PC-9 (cell line): ENCODE measurements at regions of chr10 and their contacts with region 1.

Region 1: GRCh38 chr10:60816628-60817397 is 38.5 kb downstream of the CDK1 start:
- DNase-seq: peak; percentile 33 to 59
- H3K4me3 ChIP-seq: no peak overlapping the region
- H3K27ac ChIP-seq: no peak overlapping the region
- H3K4me1 ChIP-seq: peaks cover 5% of the 10 kb centered on the region; the same call in 1 of the 2 replicates
- H3K27me3 ChIP-seq: no peaks in the 10 kb centered on the region
- CTCF ChIP-seq: peak; percentile 95

Region 2: DNA sequence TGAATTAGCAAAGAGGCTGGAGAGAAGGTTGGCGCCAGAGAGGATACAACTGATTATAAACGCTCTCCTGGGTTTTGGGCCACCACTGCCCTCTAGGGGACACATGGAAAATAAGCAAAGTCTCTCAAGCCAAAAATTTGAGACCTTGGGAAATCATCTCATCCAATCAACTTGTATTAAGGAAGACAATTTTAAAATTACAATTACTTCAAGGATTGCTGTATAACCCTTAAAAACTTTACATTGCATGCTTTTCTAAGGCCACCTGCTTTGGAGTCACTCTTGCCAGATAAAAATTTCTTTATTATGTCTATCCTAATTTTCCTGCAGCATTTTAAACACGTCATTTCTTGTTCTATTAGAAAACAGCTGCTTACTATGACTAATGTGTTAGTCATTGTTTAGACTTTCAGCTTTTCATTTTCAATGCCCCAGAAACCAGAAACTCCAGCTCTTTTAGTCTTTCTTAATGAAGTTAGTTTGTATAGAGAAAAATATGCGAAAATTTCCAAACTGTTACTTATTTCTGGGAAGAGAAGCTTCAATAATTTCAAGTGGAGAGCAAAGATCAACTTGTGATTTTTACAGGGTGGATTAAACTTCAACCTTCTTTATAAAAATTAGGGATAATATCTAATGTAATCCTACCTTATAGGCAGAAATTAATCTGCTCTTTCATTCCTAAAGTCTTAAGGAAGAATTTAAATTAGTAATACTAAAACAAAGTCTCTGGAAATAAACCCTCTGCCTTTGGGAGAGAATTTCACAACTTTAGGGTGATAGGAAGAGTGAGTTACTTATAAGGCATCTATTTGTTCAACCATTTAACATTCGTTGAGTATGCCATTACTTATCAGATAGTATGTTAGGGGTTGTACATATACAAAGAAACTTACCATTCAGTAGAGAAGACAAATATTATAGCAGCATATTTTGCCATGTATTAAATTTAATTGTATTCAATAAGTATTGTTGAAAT is 147.7 kb after region 1 on chr10:
- CTCF ChIA-PET with region 1: interaction called, 3 read pairs
- POLR2A ChIA-PET with region 1: no interaction called
- intact Hi-C with region 1: loop called (anchors 1 kb)
- DNase-seq: peak; percentile 64 to 94
- H3K4me3 ChIP-seq: peak overlapping the region; percentile 7; the same call in 1 of the 2 replicates
- H3K27ac ChIP-seq: peak overlapping the region; percentile 84
- H3K4me1 ChIP-seq: peaks cover 34% of the 10 kb centered on the region
- H3K27me3 ChIP-seq: no peaks in the 10 kb centered on the region
- CTCF ChIP-seq: peak; percentile 93

Region 3: DNA sequence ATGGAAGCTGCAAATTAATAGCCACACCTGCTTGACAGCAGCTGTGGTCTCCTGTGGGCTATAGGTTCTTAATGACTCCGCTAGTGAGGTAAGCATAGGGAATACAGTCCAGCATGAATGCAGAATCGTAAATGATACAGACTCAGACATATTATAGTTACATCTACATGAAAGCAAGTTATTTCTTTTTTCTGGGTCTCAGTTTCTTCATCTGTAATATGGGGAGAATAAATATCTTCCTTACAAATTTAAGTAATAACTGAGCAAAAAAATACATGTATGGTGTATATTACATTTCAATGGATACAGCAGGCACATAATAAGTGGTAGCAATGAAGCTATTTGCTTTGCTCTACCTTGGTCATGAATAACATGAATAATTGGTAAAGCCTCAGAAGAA is 373.1 kb after region 1 on chr10:
- CTCF ChIA-PET with region 1: no interaction called
- POLR2A ChIA-PET with region 1: no interaction called
- intact Hi-C with region 1: loop called (anchors 5 kb)
- DNase-seq: no peak
- H3K4me3 ChIP-seq: no peak overlapping the region
- H3K27ac ChIP-seq: no peak overlapping the region
- H3K4me1 ChIP-seq: no peaks in the 10 kb centered on the region
- H3K27me3 ChIP-seq: no peaks in the 10 kb centered on the region
- CTCF ChIP-seq: no peak

Region 4: DNA sequence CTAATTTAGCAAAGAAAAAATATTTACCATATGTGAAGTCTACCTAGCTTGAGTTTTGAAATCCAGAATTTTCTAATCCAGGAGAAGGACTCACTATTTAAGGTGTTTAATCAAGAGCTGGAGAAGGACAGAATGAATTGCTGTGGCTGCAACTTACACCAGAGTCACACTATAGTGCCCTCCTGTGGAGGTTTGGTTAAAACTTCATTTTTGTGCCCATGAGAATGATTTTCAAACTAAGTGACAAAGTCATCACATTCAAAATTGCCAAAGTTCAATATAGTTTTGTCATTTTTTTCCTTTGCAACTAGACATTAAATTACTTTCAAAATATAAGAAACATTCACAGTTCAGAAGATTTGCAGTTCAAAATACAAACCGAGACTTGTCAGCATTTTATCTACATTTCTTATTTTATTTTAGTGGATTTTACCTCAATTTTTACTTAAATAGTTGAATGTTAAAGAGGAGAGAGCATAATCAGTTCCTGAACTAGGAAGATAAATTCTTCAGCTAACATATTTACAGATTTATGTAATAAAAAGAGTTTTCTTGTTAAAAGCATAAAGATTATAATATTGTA is 916.6 kb after region 1 on chr10:
- CTCF ChIA-PET with region 1: no interaction called
- POLR2A ChIA-PET with region 1: no interaction called
- intact Hi-C with region 1: loop called (anchors 5 kb)
- DNase-seq: peak in 1 of 2 experiments; percentile 9
- H3K4me3 ChIP-seq: no peak overlapping the region
- H3K27ac ChIP-seq: no peak overlapping the region
- H3K4me1 ChIP-seq: no peaks in the 10 kb centered on the region
- H3K27me3 ChIP-seq: no peaks in the 10 kb centered on the region
- CTCF ChIP-seq: peak; percentile 79

Region 5: GRCh38 chr10:62244780-62245467 is 1428.1 kb after region 1 on chr10:
- CTCF ChIA-PET with region 1: no interaction called
- POLR2A ChIA-PET with region 1: no interaction called
- intact Hi-C with region 1: loop called (anchors 5 kb)
- DNase-seq: peak; percentile 37 to 58
- H3K4me3 ChIP-seq: no peak overlapping the region
- H3K27ac ChIP-seq: no peak overlapping the region
- H3K4me1 ChIP-seq: peaks cover 35% of the 10 kb centered on the region
- H3K27me3 ChIP-seq: no peaks in the 10 kb centered on the region
- CTCF ChIP-seq: peak; percentile 88